Mammary epithelial cell (primary cell): ENCODE measurements at regions of chr20 and their contacts with region 1.

Region 1: DNA sequence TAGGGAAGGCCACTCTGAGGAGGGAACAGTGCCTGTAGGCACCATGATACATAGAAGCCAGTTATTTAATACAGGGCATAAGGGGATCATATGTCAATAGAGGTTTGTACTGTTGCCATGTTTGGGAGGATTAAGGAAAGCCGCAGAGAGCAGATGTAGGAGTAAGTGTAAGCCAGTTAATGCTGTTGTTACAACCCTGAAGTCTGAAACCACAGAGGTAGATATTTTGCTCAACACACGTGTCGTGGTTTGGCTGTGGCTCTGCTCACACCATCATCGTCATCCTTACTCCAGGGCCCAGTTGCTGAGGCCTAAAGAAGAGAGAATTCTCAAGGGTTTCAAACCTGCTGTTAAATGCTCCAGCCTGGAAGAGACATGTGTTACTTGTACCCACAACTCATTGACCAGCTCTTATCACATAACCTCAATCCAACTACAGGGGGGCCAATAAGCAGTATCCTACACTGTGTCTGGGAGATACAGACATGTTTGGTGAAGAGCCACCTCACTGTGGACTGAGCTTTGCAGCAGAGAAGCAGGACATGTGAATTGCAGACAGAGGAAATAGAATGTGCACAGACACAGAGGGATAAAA is 31.0 kb upstream of the PSMF1 start:
- DNase-seq: peak; percentile 50
- H3K4me3 ChIP-seq: no peak overlapping the region
- H3K27ac ChIP-seq: no peak overlapping the region
- H3K4me1 ChIP-seq: no peaks in the 10 kb centered on the region
- H3K27me3 ChIP-seq: no peaks in the 10 kb centered on the region
- CTCF ChIP-seq: no peak

Region 2: DNA sequence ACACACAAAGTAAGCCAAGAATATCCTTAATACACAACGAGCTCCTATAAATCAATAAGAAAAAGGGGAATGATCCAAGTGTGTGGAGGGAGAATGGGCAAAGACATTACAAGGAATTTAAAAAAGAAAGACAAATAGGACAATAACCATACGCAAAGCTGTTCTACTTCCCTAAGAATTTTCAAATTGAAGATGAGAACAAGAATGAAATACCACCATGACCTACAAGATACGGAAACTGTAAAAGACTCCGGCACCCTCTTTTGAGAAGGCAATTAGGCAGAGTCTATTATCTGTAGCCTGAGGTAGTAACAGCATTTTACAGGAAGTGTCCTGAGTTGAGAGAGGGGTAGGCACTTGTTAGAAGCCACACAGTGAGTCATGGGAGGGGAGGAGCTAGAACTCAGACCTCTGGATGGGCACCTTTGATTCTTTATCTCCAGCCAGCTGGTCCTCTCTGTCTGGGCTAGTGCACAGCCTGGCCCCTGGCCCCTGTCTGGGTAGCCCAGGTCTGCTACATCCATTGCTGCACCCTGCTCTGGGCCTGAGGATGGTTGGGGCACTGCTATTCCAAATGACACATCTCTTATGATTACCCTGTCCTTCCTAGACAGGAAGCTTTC is 100.6 kb before region 1 on chr20:
- CTCF ChIA-PET with region 1: no interaction called
- dilution Hi-C with region 1: loop called (anchors 10 kb)
- in situ Hi-C with region 1: no loop called
- intact Hi-C with region 1: no loop called
- DNase-seq: peak; percentile 30
- H3K4me3 ChIP-seq: no peak overlapping the region
- H3K27ac ChIP-seq: no peak overlapping the region
- H3K4me1 ChIP-seq: no peaks in the 10 kb centered on the region
- H3K27me3 ChIP-seq: no peaks in the 10 kb centered on the region
- CTCF ChIP-seq: no peak

Region 3: DNA sequence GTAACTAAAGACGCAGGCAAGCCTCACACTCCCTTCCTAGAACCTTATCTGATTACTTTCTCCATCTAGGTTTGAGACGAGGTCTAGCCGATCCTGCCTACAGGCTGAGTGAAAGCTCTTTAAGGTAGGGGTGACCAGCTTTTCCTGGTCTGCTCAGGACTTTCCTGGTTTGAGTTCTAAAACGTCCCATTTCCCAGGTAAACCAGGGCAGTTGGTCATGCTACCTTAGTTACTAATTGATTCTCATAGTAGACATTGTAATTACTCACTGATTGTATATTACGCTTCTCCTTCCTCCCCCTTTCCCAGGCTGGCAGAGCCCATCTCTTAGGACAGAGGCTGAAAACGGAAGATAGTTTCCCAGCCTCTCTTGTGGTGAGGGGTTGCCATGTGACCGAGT is 57.4 kb before region 1 on chr20:
- CTCF ChIA-PET with region 1: no interaction called
- dilution Hi-C with region 1: no loop called
- in situ Hi-C with region 1: no loop called
- intact Hi-C with region 1: loop called (anchors 5 kb)
- DNase-seq: no peak
- H3K4me3 ChIP-seq: no peak overlapping the region
- H3K27ac ChIP-seq: no peak overlapping the region
- H3K4me1 ChIP-seq: no peaks in the 10 kb centered on the region
- H3K27me3 ChIP-seq: no peaks in the 10 kb centered on the region
- CTCF ChIP-seq: no peak

Region 4: GRCh38 chr20:1209447-1210387 is 122.3 kb after region 1 on chr20:
- CTCF ChIA-PET with region 1: no interaction called
- dilution Hi-C with region 1: no loop called
- in situ Hi-C with region 1: no loop called
- intact Hi-C with region 1: no loop called
- DNase-seq: no peak
- H3K4me3 ChIP-seq: no peak overlapping the region
- H3K27ac ChIP-seq: no peak overlapping the region
- H3K4me1 ChIP-seq: no peaks in the 10 kb centered on the region
- H3K27me3 ChIP-seq: peaks cover 1% of the 10 kb centered on the region
- CTCF ChIP-seq: peak in 1 of 2 donors; percentile 34